PC-3 (cell line): ENCODE measurements at regions of chr1 and their contacts with region 1.

Region 1: DNA sequence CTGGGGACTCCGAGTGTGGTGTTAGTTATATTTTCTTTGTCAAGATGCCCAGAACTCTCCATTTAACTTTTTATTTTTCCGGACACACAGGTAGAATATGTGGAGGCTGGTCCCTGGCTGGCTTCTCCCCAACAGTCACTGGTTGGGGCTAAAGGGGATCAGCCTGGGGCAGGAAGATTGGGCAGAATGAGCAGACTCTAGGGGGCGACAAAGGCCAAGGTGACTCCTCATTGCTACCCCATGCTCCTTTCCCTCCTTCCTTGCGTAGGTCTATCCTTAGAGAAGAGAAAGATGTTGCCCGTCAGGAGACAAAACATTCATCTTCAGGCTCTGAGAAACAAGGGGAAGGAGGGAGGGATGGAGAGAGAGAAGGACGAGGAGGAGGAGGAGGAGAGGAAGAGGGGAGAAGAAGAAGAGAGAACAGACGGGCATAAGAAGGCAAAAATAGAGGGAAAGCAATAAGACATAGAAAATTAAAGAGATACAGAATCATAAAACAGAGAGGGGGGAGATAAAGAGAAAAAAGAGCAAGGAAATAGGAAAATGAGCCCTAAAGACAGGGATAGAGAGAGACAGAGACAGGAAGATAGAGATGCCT is 89.9 kb downstream of the FOXD2 start:
- DNase-seq: peak; percentile 62
- ATAC-seq: peak; percentile 69
- H3K4me3 ChIP-seq: no peak overlapping the region
- H3K27ac ChIP-seq: no peak overlapping the region
- H3K4me1 ChIP-seq: no peaks in the 10 kb centered on the region
- H3K27me3 ChIP-seq: no peaks in the 10 kb centered on the region
- CTCF ChIP-seq: peak; percentile 85

Region 2: GRCh38 chr1:47608296-47608875 is 80.6 kb after region 1 on chr1:
- CTCF ChIA-PET with region 1: no interaction called
- POLR2A ChIA-PET with region 1: no interaction called
- intact Hi-C with region 1: loop called (anchors 10 kb)
- DNase-seq: no peak
- ATAC-seq: no peak
- H3K4me3 ChIP-seq: no peak overlapping the region
- H3K27ac ChIP-seq: no peak overlapping the region
- H3K4me1 ChIP-seq: no peaks in the 10 kb centered on the region
- H3K27me3 ChIP-seq: 0 out of 2 replicates have a peak, but pooled peaks cover 3% of the 10 kb centered on the region
- CTCF ChIP-seq: no peak

Region 3: GRCh38 chr1:47710329-47711071 is 182.7 kb after region 1 on chr1:
- CTCF ChIA-PET with region 1: no interaction called
- POLR2A ChIA-PET with region 1: no interaction called
- intact Hi-C with region 1: loop called (anchors 1 kb)
- DNase-seq: peak; percentile 77
- ATAC-seq: peak; percentile 89
- H3K4me3 ChIP-seq: peak overlapping the region; percentile 66
- H3K27ac ChIP-seq: no peak overlapping the region
- H3K4me1 ChIP-seq: peaks cover 17% of the 10 kb centered on the region
- H3K27me3 ChIP-seq: peaks cover 84% of the 10 kb centered on the region
- CTCF ChIP-seq: peak; percentile 92